ENCODE measurements at regions of chr6 and their contacts with region 1.

Region 1: GRCh38 chr6:125974214-125974866 is 12.0 kb upstream of the TRMT11 start:
- DNase-seq: no peak
- ATAC-seq: peak; percentile 41 to 72

Region 2: DNA sequence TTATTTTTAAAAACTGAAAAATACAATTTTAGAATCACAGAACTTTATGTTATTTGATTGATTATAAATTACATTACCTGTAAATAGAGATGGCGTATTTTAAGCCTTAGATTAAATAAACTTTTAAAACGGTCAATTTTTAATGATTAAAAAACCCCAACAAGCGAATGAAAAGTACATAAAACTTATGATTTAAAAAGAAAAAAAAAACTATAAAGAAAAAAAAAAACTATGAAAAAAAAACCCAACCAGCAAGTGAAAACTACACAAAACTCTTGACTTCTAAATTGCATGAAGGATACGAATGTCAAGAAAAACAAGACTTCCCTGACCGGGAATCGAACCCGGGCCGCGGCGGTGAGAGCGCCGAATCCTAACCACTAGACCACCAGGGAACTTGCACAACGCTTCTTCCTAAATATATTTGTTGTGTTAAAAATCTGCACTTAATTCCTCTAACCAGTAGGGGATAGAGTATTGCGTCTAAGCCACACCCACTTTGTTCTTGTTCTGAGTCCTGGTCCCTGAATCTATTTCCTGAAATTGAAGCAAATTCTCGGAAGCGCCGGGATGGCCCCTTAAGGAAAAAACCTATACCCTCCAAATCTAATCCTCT is 194.3 kb before region 1 on chr6:
- intact Hi-C with region 1: loop called in 1 of 2 experiments (anchors 5 kb)
- DNase-seq: peak; percentile 73
- ATAC-seq: peak; percentile 97 to 98

Region 3: GRCh38 chr6:125858427-125859320 is 115.7 kb before region 1 on chr6:
- intact Hi-C with region 1: loop called in 1 of 2 experiments (anchors 10 kb)
- DNase-seq: peak; percentile 42
- ATAC-seq: peak; percentile 86 to 94

Region 4: GRCh38 chr6:125888989-125889656 is 85.2 kb before region 1 on chr6:
- intact Hi-C with region 1: no loop called
- DNase-seq: no peak
- ATAC-seq: peak in 1 of 2 donors; percentile 21

Measured in left cardiac atrium (tissue), 4 donors.